T-cell (primary cell): ENCODE measurements at regions of chr16 and their contacts with region 1.

Region 1: GRCh38 chr16:67311607-67312488 is 14.7 kb downstream of the KCTD19 start:
- DNase-seq: peak in 2 of 35 experiments; percentile 9 to 16
- ATAC-seq: peak; percentile 43 to 53 (median 49)
- H3K4me3 ChIP-seq: no peak overlapping the region
- H3K4me3 Mint-ChIP-seq: no peak overlapping the region
- H3K27ac ChIP-seq: no peak overlapping the region
- H3K27ac Mint-ChIP-seq: no peak overlapping the region
- H3K4me1 ChIP-seq: no peaks in the 10 kb centered on the region
- H3K4me1 Mint-ChIP-seq: peaks cover 0 to 10% (median 3%) of the 10 kb centered on the region in 3 donors
- H3K27me3 ChIP-seq: peaks cover 0 to 6% of the 10 kb centered on the region in 2 experiments
- H3K27me3 Mint-ChIP-seq: peaks cover 4% of the 10 kb centered on the region in 2 donors

Region 2: GRCh38 chr16:67283826-67284555 is 27.9 kb before region 1 on chr16:
- CTCF ChIA-PET with region 1: interaction called in 1 of 2 experiments, 4 read pairs
- POLR2A ChIA-PET with region 1: interaction called in 1 of 2 experiments, 11 read pairs
- DNase-seq: no peak
- ATAC-seq: no peak
- H3K4me3 ChIP-seq: no peak overlapping the region
- H3K4me3 Mint-ChIP-seq: no peak overlapping the region
- H3K27ac ChIP-seq: no peak overlapping the region
- H3K27ac Mint-ChIP-seq: no peak overlapping the region
- H3K4me1 ChIP-seq: peaks cover 0 to 15% of the 10 kb centered on the region in 2 experiments
- H3K4me1 Mint-ChIP-seq: peaks cover 0 to 5% (median 3%) of the 10 kb centered on the region in 3 donors
- H3K27me3 ChIP-seq: no peaks in the 10 kb centered on the region
- H3K27me3 Mint-ChIP-seq: no peaks in the 10 kb centered on the region